ENCODE measurements at regions of chr12 and their contacts with region 1.

Region 1: GRCh38 chr12:56117778-56118687 is at the start of gene ZC3H10:
- DNase-seq: peak; percentile 93 to 99
- ATAC-seq: peak; percentile 78 to 93 (median 82)
- H3K4me3 ChIP-seq: peak within 1 kb of the TSS; percentile 78
- H3K4me3 Mint-ChIP-seq: peak within 1 kb of the TSS; percentile 98
- H3K27ac ChIP-seq: peak within 1 kb of the TSS; percentile 90
- H3K27ac Mint-ChIP-seq: peak within 1 kb of the TSS; percentile 95 to 99
- H3K4me1 ChIP-seq: peaks cover 28% of the 10 kb centered on the region
- H3K4me1 Mint-ChIP-seq: peaks cover 33% of the 10 kb centered on the region in 2 donors
- H3K27me3 ChIP-seq: no peaks in the 10 kb centered on the region
- H3K27me3 Mint-ChIP-seq: no peaks in the 10 kb centered on the region
- CTCF ChIP-seq: peak; percentile 47
- total RNA-seq, gene ZC3H10: 12.0 to 24.3 (median 16.2) TPM

Region 2: DNA sequence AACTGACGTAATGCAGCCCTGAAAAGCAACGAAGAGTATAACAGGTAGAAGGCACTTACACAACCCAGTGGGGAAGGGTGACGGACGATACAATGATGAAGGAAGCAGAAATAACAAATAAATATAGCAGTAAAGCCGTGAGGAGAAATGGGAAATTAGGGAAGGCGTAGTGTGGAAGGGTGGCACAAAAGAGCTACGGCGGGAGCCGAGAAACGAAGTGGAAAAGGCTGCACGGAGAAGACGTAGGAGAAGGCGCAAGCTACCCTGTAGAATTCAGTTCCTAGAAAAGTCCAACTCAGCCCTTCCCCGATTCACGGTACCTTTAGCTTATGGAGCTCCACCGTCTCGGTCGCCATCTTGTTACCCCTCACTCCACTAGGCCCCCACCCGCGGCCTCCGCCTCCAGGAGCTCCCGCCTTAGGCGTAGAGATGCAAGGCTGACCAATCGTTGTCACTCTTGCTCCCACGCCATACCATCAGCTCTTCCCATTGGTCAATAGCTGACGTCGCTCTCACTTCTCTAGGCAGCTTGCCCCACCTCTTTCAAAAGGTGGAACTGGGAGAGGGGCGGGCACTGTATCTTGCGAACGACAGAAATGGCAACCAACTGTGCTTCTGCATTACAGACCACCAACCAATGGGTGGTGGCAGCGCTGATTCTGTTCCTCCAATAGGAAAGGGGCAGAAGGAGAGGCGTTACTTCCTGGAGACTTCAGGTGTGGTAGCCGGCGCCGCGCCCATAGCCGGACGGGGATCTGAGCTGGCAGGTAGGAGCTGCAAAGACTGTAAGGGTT is 300.5 kb before region 1 on chr12 and contains the starts of genes ORMDL2 and SARNP:
- intact Hi-C with region 1: loop called (anchors 1 kb)
- DNase-seq: peak; percentile 88 to 99
- ATAC-seq: peak; percentile 91 to 97 (median 92)
- H3K4me3 ChIP-seq: peak within 1 kb of the TSS; percentile 85
- H3K4me3 Mint-ChIP-seq: no peak within 1 kb of the TSS
- H3K27ac ChIP-seq: peak within 1 kb of the TSS; percentile 78
- H3K27ac Mint-ChIP-seq: no peak within 1 kb of the TSS
- H3K4me1 ChIP-seq: peaks cover 22% of the 10 kb centered on the region
- H3K4me1 Mint-ChIP-seq: peaks cover 22 to 29% of the 10 kb centered on the region in 2 donors
- H3K27me3 ChIP-seq: no peaks in the 10 kb centered on the region
- H3K27me3 Mint-ChIP-seq: no peaks in the 10 kb centered on the region
- CTCF ChIP-seq: no peak
- total RNA-seq, gene ORMDL2: 21.3 to 36.3 (median 23.1) TPM
- total RNA-seq, gene SARNP: 50.5 to 57.0 (median 51.2) TPM

Region 3: GRCh38 chr12:55973598-55974307 is 144.3 kb before region 1 on chr12 and contains the start of gene RAB5B:
- intact Hi-C with region 1: loop called (anchors 1 kb)
- DNase-seq: peak; percentile 93 to 99
- ATAC-seq: peak; percentile 85 to 95 (median 85)
- H3K4me3 ChIP-seq: peak within 1 kb of the TSS; percentile 83
- H3K4me3 Mint-ChIP-seq: no peak within 1 kb of the TSS
- H3K27ac ChIP-seq: peak within 1 kb of the TSS; percentile 84
- H3K27ac Mint-ChIP-seq: no peak within 1 kb of the TSS
- H3K4me1 ChIP-seq: peaks cover 14% of the 10 kb centered on the region
- H3K4me1 Mint-ChIP-seq: peaks cover 18 to 24% of the 10 kb centered on the region in 2 donors
- H3K27me3 ChIP-seq: no peaks in the 10 kb centered on the region
- H3K27me3 Mint-ChIP-seq: no peaks in the 10 kb centered on the region
- CTCF ChIP-seq: no peak
- total RNA-seq, gene RAB5B: 69.4 to 80.0 (median 78.2) TPM

Region 4: GRCh38 chr12:56104109-56104814 is 13.8 kb before region 1 on chr12 and contains the start of gene PA2G4:
- intact Hi-C with region 1: loop called (anchors 1 kb)
- DNase-seq: peak; percentile 87 to 97
- ATAC-seq: peak; percentile 92 to 97 (median 93)
- H3K4me3 ChIP-seq: peak within 1 kb of the TSS; percentile 81
- H3K4me3 Mint-ChIP-seq: peak within 1 kb of the TSS; percentile 100
- H3K27ac ChIP-seq: peak within 1 kb of the TSS; percentile 80
- H3K27ac Mint-ChIP-seq: peak within 1 kb of the TSS; percentile 97 to 99
- H3K4me1 ChIP-seq: peaks cover 37% of the 10 kb centered on the region
- H3K4me1 Mint-ChIP-seq: peaks cover 52 to 56% of the 10 kb centered on the region in 2 donors
- H3K27me3 ChIP-seq: no peaks in the 10 kb centered on the region
- H3K27me3 Mint-ChIP-seq: no peaks in the 10 kb centered on the region
- CTCF ChIP-seq: no peak
- total RNA-seq, gene PA2G4: 78.5 to 86.4 (median 79.7) TPM

Region 5: GRCh38 chr12:56158029-56158925 is 40.2 kb after region 1 on chr12 and contains the start of gene MYL6:
- intact Hi-C with region 1: loop called (anchors 1 kb)
- DNase-seq: peak; percentile 81 to 98
- ATAC-seq: peak; percentile 83 to 88 (median 85)
- H3K4me3 ChIP-seq: peak within 1 kb of the TSS; percentile 85
- H3K4me3 Mint-ChIP-seq: peak within 1 kb of the TSS; percentile 96
- H3K27ac ChIP-seq: peak within 1 kb of the TSS; percentile 95
- H3K27ac Mint-ChIP-seq: peak within 1 kb of the TSS; percentile 96 to 98
- H3K4me1 ChIP-seq: peaks cover 42% of the 10 kb centered on the region
- H3K4me1 Mint-ChIP-seq: peaks cover 48 to 62% of the 10 kb centered on the region in 2 donors
- H3K27me3 ChIP-seq: no peaks in the 10 kb centered on the region
- H3K27me3 Mint-ChIP-seq: no peaks in the 10 kb centered on the region
- CTCF ChIP-seq: no peak
- total RNA-seq, gene MYL6: 881 to 1,204 (median 1,015) TPM

Region 6: GRCh38 chr12:56224102-56224701 is 106.2 kb after region 1 on chr12 and contains the start of gene NABP2:
- intact Hi-C with region 1: loop called (anchors 1 kb)
- DNase-seq: peak; percentile 85 to 96
- ATAC-seq: peak; percentile 70 to 86 (median 79)
- H3K4me3 ChIP-seq: peak within 1 kb of the TSS; percentile 56
- H3K4me3 Mint-ChIP-seq: peak within 1 kb of the TSS; percentile 92
- H3K27ac ChIP-seq: peak within 1 kb of the TSS; percentile 70
- H3K27ac Mint-ChIP-seq: peak within 1 kb of the TSS; percentile 100
- H3K4me1 ChIP-seq: peaks cover 47% of the 10 kb centered on the region
- H3K4me1 Mint-ChIP-seq: peaks cover 48 to 53% of the 10 kb centered on the region in 2 donors
- H3K27me3 ChIP-seq: no peaks in the 10 kb centered on the region
- H3K27me3 Mint-ChIP-seq: no peaks in the 10 kb centered on the region
- CTCF ChIP-seq: peak; percentile 91
- total RNA-seq, gene NABP2: 21.6 to 23.4 (median 22.6) TPM

Region 7: DNA sequence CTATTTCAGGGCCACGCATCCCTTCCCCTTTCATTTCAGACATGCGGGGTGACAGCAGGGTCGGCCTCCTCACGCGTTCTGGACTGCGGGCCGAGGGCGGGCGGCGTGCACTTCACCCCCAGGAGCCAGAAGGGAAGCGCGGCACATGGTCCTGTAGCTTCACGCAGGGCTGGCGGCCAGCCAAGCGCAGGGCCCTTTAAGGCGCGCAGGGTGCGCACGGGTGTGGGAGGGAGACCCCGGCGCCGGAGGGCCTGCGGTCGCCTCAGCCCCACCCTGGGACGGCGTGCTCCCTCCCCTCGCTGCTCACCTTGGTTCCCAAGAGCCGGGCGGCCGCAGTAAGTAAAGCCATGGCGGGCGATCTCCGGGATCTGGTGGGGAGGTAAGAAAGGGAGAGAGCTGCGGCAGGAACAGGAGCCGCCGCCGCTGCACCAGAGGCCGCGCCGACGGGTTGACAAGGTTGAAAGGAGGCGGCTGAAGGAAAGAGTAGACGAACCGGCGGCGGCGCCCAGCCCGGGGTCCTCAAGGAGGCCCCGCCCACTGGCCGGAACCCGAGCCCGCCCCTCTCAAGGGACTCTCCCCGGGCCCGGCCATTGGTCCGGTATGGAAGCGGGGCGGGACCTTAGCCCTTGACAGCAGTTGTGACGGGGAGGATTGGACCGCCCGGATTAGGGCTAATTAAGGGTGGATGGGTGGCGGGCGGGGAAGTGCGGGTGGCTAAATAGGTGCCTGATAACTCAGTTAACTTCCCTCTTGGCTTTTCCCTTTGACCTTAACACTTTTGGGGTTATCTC is 182.0 kb after region 1 on chr12 and contains the start of gene CS:
- intact Hi-C with region 1: loop called (anchors 2 kb)
- DNase-seq: peak; percentile 98 to 99
- ATAC-seq: peak; percentile 95 to 99 (median 96)
- H3K4me3 ChIP-seq: peak within 1 kb of the TSS; percentile 72
- H3K4me3 Mint-ChIP-seq: peak within 1 kb of the TSS; percentile 93
- H3K27ac ChIP-seq: peak within 1 kb of the TSS; percentile 88
- H3K27ac Mint-ChIP-seq: peak within 1 kb of the TSS; percentile 97 to 98
- H3K4me1 ChIP-seq: peaks cover 34% of the 10 kb centered on the region
- H3K4me1 Mint-ChIP-seq: peaks cover 55 to 56% of the 10 kb centered on the region in 2 donors
- H3K27me3 ChIP-seq: no peaks in the 10 kb centered on the region
- H3K27me3 Mint-ChIP-seq: no peaks in the 10 kb centered on the region
- CTCF ChIP-seq: no peak
- total RNA-seq, gene CS: 185 to 190 (median 188) TPM

Measured in natural killer cell (primary cell).